Tibial artery (tissue), 4 donors: ENCODE measurements at regions of chr2 and their contacts with region 1.

Region 1: GRCh38 chr2:168346725-168347477 is 99.5 kb upstream of the STK39 start:
- DNase-seq: peak; percentile 60 to 68
- H3K4me3 ChIP-seq: peak overlapping the region; percentile 44 to 52
- H3K27ac ChIP-seq: no peak overlapping the region
- H3K4me1 ChIP-seq: peaks cover 0 to 4% (median 0%) of the 10 kb centered on the region in 4 donors
- H3K27me3 ChIP-seq: peaks cover 0 to 4% of the 10 kb centered on the region in 2 donors
- CTCF ChIP-seq: peak; percentile 84 to 86

Region 2: DNA sequence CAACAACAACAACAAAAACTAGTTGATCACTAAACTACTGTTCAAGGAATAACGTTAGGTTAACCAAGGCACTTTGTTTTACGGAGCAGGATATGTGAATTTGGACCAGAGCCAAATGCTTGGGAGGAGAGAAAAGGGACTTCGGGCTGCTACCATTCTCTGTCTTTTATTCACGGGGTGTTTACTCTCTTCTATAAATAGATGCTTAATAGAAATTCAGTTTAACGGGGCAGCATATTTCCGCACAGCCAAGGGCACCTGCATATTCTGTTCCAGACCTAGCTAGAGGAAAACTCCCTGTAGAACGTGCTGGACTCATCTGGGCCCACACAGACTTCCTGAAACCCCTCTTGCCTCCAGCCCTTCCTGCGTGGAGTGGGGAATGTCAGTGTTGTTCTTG is 63.7 kb before region 1 on chr2:
- intact Hi-C with region 1: no loop called
- DNase-seq: no peak
- H3K4me3 ChIP-seq: no peak overlapping the region
- H3K27ac ChIP-seq: no peak overlapping the region
- H3K4me1 ChIP-seq: no peaks in the 10 kb centered on the region
- H3K27me3 ChIP-seq: no peaks in the 10 kb centered on the region
- CTCF ChIP-seq: no peak

Region 3: DNA sequence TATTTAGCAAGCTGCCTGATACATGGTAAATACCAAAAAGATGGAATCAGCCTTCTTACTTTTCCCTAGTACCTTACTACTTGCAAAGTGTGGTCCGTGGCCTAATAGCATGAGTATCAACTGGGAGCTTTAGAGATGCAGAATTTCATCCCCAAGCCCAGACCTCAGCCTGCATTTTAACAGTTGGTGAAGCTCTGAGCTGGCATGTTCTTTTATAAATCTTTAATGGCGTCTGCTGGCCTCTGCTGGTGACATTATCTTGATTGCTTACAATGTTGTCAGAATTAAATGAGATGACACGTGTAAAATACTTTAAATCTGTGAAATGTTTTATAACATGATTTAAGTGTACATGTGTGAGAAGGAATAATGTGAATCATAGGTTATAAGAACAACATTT is 340.4 kb after region 1 on chr2:
- intact Hi-C with region 1: loop called (anchors 5 kb)
- DNase-seq: no peak
- H3K4me3 ChIP-seq: no peak overlapping the region
- H3K27ac ChIP-seq: no peak overlapping the region
- H3K4me1 ChIP-seq: peaks cover 0 to 5% (median 0%) of the 10 kb centered on the region in 4 donors
- H3K27me3 ChIP-seq: no peaks in the 10 kb centered on the region
- CTCF ChIP-seq: peak in 1 of 2 experiments; percentile 47

Region 4: DNA sequence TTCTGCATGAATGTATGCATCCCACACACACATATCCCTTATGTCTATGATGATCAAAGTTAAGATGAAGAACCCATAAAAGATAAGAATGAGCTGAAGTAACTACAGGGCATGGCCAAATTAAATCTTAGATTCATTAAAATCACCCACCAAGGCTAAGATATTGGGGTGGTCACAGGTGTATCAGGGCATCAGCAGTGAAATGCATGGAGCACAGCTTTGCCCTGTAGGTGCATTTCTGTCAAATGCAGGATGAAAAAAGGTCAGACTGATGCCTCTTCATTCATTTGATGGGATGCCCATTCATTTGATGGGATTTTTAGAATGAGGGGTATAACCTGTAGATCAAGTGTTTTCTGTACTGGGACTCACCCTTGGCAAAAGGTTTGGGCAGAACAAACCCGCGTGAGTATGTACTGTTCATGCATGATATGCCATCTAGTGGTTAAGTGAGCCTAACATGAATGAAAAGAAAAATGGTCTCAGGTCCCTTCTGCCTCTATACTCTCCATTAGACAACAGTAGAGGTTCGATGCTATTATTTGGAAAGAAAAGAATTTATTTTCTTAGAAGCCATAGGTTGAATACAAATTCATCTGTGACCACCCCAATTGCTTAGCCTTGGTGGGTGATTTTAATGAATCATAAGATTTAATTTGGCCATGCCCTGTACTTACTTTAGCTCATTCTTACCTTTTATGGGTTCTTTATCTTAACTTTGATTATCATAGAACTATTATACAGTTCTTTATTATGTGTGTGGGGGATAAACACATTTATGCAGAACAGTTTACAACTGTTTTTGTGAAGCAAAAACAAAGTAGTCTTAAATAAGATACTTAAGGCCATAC is 412.3 kb after region 1 on chr2:
- intact Hi-C with region 1: loop called (anchors 5 kb)
- DNase-seq: no peak
- H3K4me3 ChIP-seq: no peak overlapping the region
- H3K27ac ChIP-seq: no peak overlapping the region
- H3K4me1 ChIP-seq: no peaks in the 10 kb centered on the region
- H3K27me3 ChIP-seq: no peaks in the 10 kb centered on the region
- CTCF ChIP-seq: peak; percentile 48 to 57

Region 5: GRCh38 chr2:168920504-168921157 is 573.7 kb after region 1 on chr2:
- intact Hi-C with region 1: loop called (anchors 10 kb)
- DNase-seq: no peak
- H3K4me3 ChIP-seq: no peak overlapping the region
- H3K27ac ChIP-seq: no peak overlapping the region
- H3K4me1 ChIP-seq: no peaks in the 10 kb centered on the region
- H3K27me3 ChIP-seq: no peaks in the 10 kb centered on the region
- CTCF ChIP-seq: peak; percentile 34 to 52